Right cardiac atrium (tissue), 5 donors: ENCODE measurements at regions of chr2 and their contacts with region 1.

Region 1: GRCh38 chr2:73779467-73780236 is at the start of gene DUSP11:
- DNase-seq: peak; percentile 95 to 99 (median 97)
- ATAC-seq: peak; percentile 99 to 100
- H3K4me3 ChIP-seq: peak within 1 kb of the TSS; percentile 88
- H3K27ac ChIP-seq: peak within 1 kb of the TSS; percentile 92
- H3K4me1 ChIP-seq: no peaks in the 10 kb centered on the region
- H3K27me3 ChIP-seq: no peaks in the 10 kb centered on the region
- total RNA-seq, gene DUSP11: 13.0 to 16.2 (median 14.4) TPM

Region 2: GRCh38 chr2:73685770-73686438 is 93.7 kb before region 1 on chr2:
- intact Hi-C with region 1: loop called in 1 of 4 experiments (anchors 10 kb)
- DNase-seq: peak in 1 of 3 donors; percentile 50
- ATAC-seq: peak in 1 of 2 donors; percentile 36
- H3K4me3 ChIP-seq: no peak overlapping the region
- H3K27ac ChIP-seq: no peak overlapping the region
- H3K4me1 ChIP-seq: no peaks in the 10 kb centered on the region
- H3K27me3 ChIP-seq: no peaks in the 10 kb centered on the region